Posterior vena cava (tissue), 2 donors: ENCODE measurements at regions of chr15 and their contacts with region 1.

Region 1: GRCh38 chr15:69289342-69290146 is 9.2 kb upstream of the PAQR5 start:
- DNase-seq: no peak

Region 2: GRCh38 chr15:68517285-68517761 is 772.2 kb before region 1 on chr15:
- intact Hi-C with region 1: no loop called
- DNase-seq: no peak

Region 3: GRCh38 chr15:69164807-69165636 is 124.5 kb before region 1 on chr15:
- intact Hi-C with region 1: no loop called
- DNase-seq: no peak

Region 4: DNA sequence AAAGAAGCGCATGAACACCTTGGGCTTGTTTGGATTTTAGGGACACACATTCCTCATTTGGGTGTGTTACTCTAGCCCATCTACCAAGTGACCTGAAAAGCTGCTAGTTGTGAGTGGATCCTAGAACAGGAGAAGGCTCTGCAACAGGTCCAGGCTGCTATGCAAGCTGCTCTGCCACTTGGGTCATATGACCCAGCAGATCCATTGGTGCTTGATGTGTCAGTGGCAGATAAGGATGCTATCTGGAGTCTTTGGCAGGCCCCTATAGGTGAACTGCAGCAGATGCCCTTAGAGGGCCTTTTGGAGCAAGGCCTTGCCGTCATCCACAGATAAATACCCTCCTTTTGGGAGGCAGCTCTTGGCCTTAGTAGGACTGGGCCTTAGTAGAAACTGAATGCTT is 62.3 kb after region 1 on chr15:
- intact Hi-C with region 1: loop called in 1 of 2 experiments (anchors 2 kb)
- DNase-seq: no peak

Region 5: DNA sequence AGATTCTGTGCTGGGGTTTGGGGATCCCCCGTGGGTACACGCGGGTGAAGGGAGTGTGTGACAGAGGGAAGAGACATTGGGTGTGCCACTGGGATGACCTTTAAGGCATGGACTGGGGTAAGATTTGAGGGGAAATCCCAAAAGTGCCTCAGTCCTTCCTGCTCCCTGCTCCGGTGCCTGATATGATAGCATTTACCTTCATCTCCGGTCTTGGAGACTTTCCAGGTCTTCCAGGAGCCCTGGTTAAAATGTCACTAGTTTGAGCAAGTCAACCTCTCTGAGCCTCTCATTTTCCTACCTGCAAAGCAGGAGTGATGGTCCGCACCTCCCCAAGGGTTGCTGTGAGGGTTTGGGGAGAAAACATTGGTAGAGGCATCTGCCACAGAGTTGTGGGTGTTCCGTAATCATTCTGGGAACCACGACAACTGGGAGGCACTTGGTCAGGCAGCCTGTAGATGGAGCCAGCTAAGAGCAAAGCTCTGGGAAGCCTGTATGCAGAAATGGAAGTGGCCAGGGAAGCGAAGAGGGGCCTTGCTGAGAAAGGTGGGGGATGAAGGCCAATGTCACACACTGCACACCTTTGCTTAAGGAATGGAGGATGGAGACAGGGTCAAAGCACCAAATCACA is 90.7 kb after region 1 on chr15:
- intact Hi-C with region 1: no loop called
- DNase-seq: no peak

Region 6: DNA sequence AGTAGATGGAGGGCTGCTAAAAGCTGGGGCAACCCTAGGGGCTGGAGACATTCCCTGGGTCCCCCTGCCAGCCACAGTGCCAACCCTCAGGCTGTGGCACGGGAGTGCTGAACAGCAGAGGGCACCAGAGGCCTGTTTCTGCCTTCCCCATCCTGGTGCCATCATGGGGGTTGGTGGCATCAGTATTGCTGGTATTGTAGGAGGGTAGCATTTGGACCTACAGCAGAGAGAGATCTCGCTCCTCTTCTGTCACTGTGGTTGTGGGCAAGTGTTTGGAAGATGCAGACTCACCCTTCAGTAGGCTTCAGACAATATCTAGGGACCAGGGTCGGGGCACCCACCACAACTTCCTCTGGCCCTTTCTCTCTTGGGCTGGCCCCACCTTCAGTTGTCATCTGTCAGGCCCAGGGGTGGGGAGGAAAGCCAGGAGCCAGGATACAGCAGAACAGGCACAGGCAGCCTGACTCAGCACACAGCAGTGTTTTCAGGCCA is 286.5 kb after region 1 on chr15:
- intact Hi-C with region 1: no loop called
- DNase-seq: peak; percentile 90